Transverse colon (tissue), 4 donors: ENCODE measurements at regions of chr1 and their contacts with region 1.

Region 1: DNA sequence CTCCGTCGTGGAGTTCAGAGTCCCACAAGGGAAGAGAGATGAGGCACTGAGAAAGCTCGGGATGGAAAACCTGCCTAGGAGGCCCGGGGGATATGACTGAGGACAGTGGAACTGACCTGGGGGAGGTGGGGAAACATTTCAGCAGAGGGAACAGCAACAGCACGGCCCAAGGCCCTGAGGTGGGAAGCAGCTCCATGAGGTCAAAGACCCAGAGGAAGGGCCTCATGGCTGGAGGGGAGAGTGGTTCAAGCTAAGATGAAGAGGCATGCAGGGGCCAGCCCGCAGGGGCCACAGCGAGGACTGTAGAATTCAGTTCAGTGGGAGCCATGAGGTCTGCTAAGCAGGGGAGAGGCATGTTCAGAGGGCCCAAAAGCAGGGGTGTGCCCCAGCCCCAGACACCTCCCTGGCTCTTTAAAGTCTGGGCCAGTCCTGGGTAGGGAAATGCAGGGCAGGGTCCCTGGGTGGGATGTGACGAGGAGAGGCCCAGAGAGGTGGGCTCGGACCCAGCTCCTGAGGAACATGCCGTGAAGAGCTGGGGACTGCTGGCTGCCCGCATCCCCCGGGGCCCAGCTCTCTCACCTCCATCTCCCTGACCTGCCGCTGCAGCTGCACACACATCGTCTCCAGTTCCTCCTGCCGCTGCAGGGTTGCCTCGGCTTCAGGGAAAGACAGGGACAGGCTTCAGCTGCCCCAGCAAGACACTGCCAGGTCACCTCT is 9.9 kb downstream of the UBXN11 start:
- DNase-seq: no peak
- H3K4me3 ChIP-seq: no peak overlapping the region
- H3K27ac ChIP-seq: no peak overlapping the region
- H3K4me1 ChIP-seq: peaks cover 0 to 3% (median 0%) of the 10 kb centered on the region in 4 donors
- H3K27me3 ChIP-seq: no peaks in the 10 kb centered on the region
- CTCF ChIP-seq: no peak
- EP300 ChIP-seq: no peak
- POLR2A ChIP-seq: no peak

Region 2: GRCh38 chr1:27519331-27520258 is 1223.1 kb after region 1 on chr1:
- in situ Hi-C with region 1: no loop called
- intact Hi-C with region 1: loop called (anchors 5 kb)
- DNase-seq: peak; percentile 36
- H3K4me3 ChIP-seq: no peak overlapping the region
- H3K27ac ChIP-seq: peak overlapping the region; percentile 80 to 91 (median 84)
- H3K4me1 ChIP-seq: peaks cover 45 to 76% (median 62%) of the 10 kb centered on the region in 4 donors
- H3K27me3 ChIP-seq: no peaks in the 10 kb centered on the region
- CTCF ChIP-seq: no peak
- EP300 ChIP-seq: no peak
- POLR2A ChIP-seq: no peak